ENCODE measurements at regions of chr3 and their contacts with region 1.

Region 1: GRCh38 chr3:132253262-132253878 is 63.8 kb upstream of the ACP3 start:
- DNase-seq: peak; percentile 67 to 87 (median 81)
- H3K4me3 ChIP-seq: no peak overlapping the region
- H3K27ac ChIP-seq: no peak overlapping the region
- H3K4me1 ChIP-seq: no peaks in the 10 kb centered on the region
- H3K27me3 ChIP-seq: no peaks in the 10 kb centered on the region

Region 2: DNA sequence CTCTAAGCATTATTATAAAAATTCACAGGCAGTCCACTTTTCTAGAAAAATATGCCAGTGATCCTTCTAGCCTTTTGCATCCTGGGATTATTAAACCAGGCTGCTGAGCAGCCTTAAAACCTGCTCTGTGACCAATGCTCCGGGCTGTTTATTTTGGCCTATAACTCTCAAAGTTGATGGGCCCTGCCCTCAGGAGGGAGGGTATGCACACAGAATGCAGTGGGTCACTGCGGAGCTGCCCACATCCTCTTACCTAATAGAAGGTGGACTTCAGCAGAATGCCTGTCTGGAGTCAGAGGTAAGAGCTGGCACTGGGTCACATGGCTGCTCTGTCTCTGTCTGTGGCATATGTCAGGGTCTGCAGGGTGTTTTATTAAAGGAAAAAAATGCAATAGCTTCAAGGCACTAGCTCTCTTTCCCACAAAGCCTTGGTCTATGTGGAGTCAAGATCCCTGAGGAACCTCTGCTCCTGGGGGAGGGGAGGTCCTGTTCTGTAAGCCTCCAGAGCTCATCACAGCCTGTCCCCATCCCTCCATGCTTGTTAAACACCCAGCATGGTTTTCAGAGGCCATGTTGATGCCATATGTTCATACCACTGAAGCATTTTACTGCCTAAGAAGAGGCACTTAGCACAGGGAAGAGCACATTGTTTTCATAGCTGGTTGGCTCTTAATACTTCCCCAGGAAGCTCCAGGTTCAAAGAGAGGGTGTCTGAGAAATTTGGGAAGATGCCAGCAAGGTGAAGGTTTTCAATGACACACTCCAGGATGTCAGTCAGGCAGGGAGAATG is 244.3 kb before region 1 on chr3:
- CTCF ChIA-PET with region 1: no interaction called
- POLR2A ChIA-PET with region 1: no interaction called
- DNase-seq: no peak
- H3K4me3 ChIP-seq: no peak overlapping the region
- H3K27ac ChIP-seq: no peak overlapping the region
- H3K4me1 ChIP-seq: no peaks in the 10 kb centered on the region
- H3K27me3 ChIP-seq: peaks cover 0 to 6% (median 4%) of the 10 kb centered on the region in 5 experiments

Region 3: GRCh38 chr3:132343018-132343612 is 89.7 kb after region 1 on chr3:
- CTCF ChIA-PET with region 1: interaction called, 93 read pairs
- POLR2A ChIA-PET with region 1: no interaction called
- DNase-seq: peak; percentile 73 to 82 (median 77)
- H3K4me3 ChIP-seq: peak overlapping the region in 4 of 7 experiments; percentile 15 to 58 (median 53)
- H3K27ac ChIP-seq: no peak overlapping the region
- H3K4me1 ChIP-seq: peaks cover 0 to 15% (median 9%) of the 10 kb centered on the region in 4 experiments
- H3K27me3 ChIP-seq: no peaks in the 10 kb centered on the region

Region 4: GRCh38 chr3:132352541-132353143 is 99.3 kb after region 1 on chr3:
- CTCF ChIA-PET with region 1: interaction called, 93 read pairs
- POLR2A ChIA-PET with region 1: no interaction called
- DNase-seq: peak; percentile 71 to 82 (median 78)
- H3K4me3 ChIP-seq: no peak overlapping the region
- H3K27ac ChIP-seq: no peak overlapping the region
- H3K4me1 ChIP-seq: no peaks in the 10 kb centered on the region
- H3K27me3 ChIP-seq: no peaks in the 10 kb centered on the region